ENCODE measurements at regions of chr11 and their contacts with region 1.

Region 1: DNA sequence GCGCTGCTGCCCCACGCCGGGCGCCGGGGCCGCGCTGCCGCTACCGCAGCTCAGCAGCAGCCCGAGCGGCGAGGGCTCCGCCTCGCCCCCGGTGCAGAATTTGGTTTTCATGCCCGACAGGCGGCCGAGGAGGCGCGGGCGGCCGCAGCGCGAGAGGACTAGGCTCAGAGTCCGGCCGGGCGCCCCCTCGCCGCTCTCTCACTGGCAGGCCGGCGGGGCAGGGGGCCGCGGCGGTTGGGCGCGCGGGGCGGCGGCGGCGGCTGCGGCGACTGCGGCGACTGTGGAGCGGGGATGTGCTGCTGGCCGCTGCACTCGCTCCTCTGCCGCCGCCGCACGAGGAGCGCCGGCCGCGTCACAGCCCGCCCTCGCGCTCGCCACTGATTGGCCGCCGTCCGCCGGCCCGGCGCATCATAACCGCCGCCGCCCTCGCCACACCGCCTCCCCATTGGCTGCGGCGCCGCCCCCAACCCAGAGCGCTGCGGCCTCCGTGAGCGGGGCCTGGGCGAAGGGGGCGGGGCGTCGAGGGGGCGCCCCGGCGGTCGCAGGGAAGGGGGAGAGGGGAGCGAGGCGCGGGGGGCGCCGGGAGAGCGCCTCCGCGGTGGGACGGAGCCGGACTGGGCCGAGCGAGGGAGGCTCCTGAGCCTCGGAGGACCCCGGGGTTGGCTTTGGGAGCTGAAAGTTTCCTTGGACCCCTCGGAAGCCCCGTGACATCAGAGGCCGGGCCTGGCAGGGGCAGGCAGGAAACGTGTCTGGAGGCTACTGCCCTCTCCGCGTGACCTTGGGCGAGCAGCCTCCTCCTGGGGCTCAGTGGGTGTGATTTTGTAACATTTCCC is at the start of gene CHKA:
- DNase-seq: peak; percentile 85
- H3K4me3 Mint-ChIP-seq: peak within 1 kb of the TSS; percentile 88
- H3K27ac Mint-ChIP-seq: peak within 1 kb of the TSS; percentile 87
- H3K4me1 Mint-ChIP-seq: peaks cover 5% of the 10 kb centered on the region
- H3K27me3 Mint-ChIP-seq: peaks cover 16% of the 10 kb centered on the region
- total RNA-seq, gene CHKA: 13.2 and 13.7 TPM in 2 replicates

Region 2: DNA sequence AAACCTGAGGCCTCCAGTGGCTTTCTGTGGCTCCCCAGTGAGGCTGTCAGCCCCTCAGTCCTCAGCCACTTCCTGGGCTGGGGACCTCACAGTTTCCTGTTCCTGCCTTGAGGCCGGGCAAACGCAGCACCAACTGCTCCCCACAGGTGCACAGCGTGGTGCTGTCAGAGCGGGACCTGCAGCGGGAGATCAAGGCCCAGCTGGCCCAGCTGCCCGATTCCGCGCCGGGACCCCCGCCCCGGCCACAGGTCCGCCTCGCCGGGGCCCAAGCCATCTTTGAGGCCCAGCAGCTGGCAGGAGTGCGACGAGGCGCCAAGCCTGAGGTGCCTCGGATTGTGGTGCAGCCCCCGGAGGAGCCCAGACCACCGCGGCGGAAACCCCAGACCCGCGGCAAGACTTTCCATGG is 712.0 kb before region 1 on chr11:
- intact Hi-C with region 1: loop called (anchors 5 kb)
- DNase-seq: peak; percentile 78
- H3K4me3 Mint-ChIP-seq: peak overlapping the region; percentile 88
- H3K27ac Mint-ChIP-seq: peak overlapping the region; percentile 94
- H3K4me1 Mint-ChIP-seq: peaks cover 75% of the 10 kb centered on the region
- H3K27me3 Mint-ChIP-seq: peaks cover 2% of the 10 kb centered on the region

Region 3: DNA sequence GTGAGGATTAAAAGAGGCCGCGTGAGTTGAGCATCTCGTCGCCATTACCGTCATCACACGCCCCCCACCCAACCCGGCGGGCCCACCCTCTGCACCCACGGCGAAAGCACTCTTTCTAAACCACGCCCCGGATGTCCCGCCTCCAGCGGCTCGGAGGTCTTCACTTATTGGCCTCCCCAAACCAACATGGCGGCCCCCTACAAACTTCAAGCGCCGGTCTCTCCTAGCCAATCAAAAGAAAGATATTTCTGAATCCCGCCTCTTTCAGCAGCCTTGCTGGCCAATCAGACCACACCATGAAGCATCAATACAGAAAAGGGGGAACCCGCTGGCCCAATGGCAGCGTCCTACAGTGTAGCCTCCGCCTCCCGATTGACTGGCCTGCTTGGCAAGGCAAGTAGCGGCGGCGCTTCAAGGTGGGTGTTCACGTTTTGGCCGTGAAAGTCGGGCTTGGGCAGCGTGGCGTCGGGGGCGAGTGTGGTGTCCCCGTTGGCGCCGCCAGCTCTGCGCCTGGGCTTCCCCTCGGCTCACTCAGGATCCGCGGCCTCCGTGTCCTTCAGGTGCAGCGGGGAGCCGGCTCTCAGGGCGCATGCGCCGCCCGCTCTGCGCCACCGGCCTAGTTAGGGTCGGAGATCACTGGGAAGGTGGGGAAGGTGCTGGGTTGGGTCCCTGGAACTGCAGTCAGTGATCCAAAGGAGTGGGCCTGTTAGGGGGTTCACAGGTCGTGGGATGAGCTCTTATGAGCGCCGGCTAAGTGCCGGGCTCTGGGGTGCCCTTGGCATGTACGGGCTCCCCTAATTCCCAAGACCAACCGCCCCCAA is 90.8 kb before region 1 on chr11 and contains the start of gene NDUFS8:
- intact Hi-C with region 1: loop called (anchors 1 kb)
- DNase-seq: peak; percentile 96
- H3K4me3 Mint-ChIP-seq: peak within 1 kb of the TSS; percentile 92
- H3K27ac Mint-ChIP-seq: peak within 1 kb of the TSS; percentile 82
- H3K4me1 Mint-ChIP-seq: peaks cover 20% of the 10 kb centered on the region
- H3K27me3 Mint-ChIP-seq: peaks cover 1% of the 10 kb centered on the region
- total RNA-seq, gene NDUFS8: 137 and 144 TPM in 2 replicates

Region 4: DNA sequence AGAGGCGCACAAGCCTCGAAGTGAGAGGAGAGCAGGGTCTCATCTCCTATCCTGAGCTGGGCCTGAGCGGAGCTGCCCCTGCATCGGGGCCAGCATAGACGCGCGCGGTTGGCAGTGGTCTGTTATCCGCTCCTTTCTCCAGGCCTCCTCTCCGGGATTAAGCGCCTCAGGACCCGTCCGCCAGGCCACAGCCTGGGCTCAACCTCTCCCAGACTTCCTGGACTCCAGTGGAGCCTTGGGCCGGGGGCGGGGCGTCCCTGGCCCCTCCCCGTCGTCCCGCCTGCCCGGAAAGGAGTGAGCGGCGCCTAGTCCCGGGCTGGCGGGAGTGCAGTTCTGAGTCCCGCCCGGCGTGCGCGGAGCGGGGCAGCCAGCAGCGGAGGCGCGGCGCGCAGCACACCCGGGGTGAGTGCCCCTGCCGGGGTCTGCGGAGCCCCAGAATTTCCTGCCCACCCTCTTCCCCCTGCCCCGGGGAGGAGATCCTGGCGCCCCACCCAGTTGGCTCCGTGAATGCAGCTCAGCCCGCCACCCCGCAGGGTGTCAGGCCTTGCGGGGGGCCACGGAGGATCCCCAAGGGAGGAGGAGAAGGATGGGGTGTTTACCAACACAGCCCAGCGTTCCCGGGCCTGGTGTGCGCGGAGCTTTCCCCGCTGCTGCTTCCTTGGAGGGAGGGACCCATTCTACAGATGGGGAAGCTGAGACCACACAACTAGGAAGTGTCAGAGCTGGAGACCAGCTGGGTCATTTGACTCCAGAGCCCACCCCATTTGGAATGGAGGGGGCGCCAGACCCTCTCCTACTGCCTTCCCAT is 82.4 kb before region 1 on chr11 and contains the start of gene TCIRG1:
- intact Hi-C with region 1: loop called (anchors 2 kb)
- DNase-seq: peak; percentile 54
- H3K4me3 Mint-ChIP-seq: peak within 1 kb of the TSS; percentile 93
- H3K27ac Mint-ChIP-seq: peak within 1 kb of the TSS; percentile 94
- H3K4me1 Mint-ChIP-seq: peaks cover 11% of the 10 kb centered on the region
- H3K27me3 Mint-ChIP-seq: no peaks in the 10 kb centered on the region
- total RNA-seq, gene TCIRG1: 142 and 152 TPM in 2 replicates

Region 5: GRCh38 chr11:68099474-68100405 is 21.5 kb before region 1 on chr11:
- intact Hi-C with region 1: no loop called
- DNase-seq: no peak
- H3K4me3 Mint-ChIP-seq: no peak overlapping the region
- H3K27ac Mint-ChIP-seq: no peak overlapping the region
- H3K4me1 Mint-ChIP-seq: peaks cover 14% of the 10 kb centered on the region
- H3K27me3 Mint-ChIP-seq: no peaks in the 10 kb centered on the region

Region 6: GRCh38 chr11:68142028-68142412 is 20.7 kb after region 1 on chr11:
- intact Hi-C with region 1: loop called (anchors 2 kb)
- DNase-seq: peak; percentile 26
- H3K4me3 Mint-ChIP-seq: no peak overlapping the region
- H3K27ac Mint-ChIP-seq: peak overlapping the region; percentile 44
- H3K4me1 Mint-ChIP-seq: peaks cover 12% of the 10 kb centered on the region
- H3K27me3 Mint-ChIP-seq: peaks cover 4% of the 10 kb centered on the region

Region 7: GRCh38 chr11:68206187-68206601 is 84.9 kb after region 1 on chr11:
- intact Hi-C with region 1: loop called (anchors 2 kb)
- DNase-seq: no peak
- H3K4me3 Mint-ChIP-seq: no peak overlapping the region
- H3K27ac Mint-ChIP-seq: no peak overlapping the region
- H3K4me1 Mint-ChIP-seq: peaks cover 36% of the 10 kb centered on the region
- H3K27me3 Mint-ChIP-seq: peaks cover 4% of the 10 kb centered on the region

Region 8: GRCh38 chr11:68213555-68214174 is 92.4 kb after region 1 on chr11:
- intact Hi-C with region 1: loop called (anchors 2 kb)
- DNase-seq: peak; percentile 76
- H3K4me3 Mint-ChIP-seq: peak overlapping the region; percentile 64
- H3K27ac Mint-ChIP-seq: no peak overlapping the region
- H3K4me1 Mint-ChIP-seq: peaks cover 44% of the 10 kb centered on the region
- H3K27me3 Mint-ChIP-seq: peaks cover 20% of the 10 kb centered on the region

Measured in activated T-helper 1 cell treated with anti-CD3 and anti-CD28 coated beads, Interleukin-12 subunit alpha, Interleukin-12 subunit beta, Interleukin-2, Interleukin-4 antibody, amounts not matched to agents 30 ng/mL and 10 ng/mL and 1 ng/mL, durations not matched to agents 14 hours and 24 hours and 36 hours (primary cell).